GM12878 (cell line): ENCODE measurements at regions of chr6 and their contacts with region 1.

Region 1: GRCh38 chr6:108782179-108783041 is 65.8 kb upstream of the ARMC2 start:
- DNase-seq: no peak
- ATAC-seq: peak; percentile 98
- H3K4me3 ChIP-seq: peak overlapping the region; percentile 42; the same call in 1 of the 2 replicates
- H3K27ac ChIP-seq: no peak overlapping the region
- H3K4me1 ChIP-seq: no peaks in the 10 kb centered on the region
- H3K27me3 ChIP-seq: peaks cover 3 to 22% of the 10 kb centered on the region in 2 experiments; a peak in 3 of 4 replicates
- CTCF ChIP-seq: peak; percentile 81 to 93 (median 86)
- EP300 ChIP-seq: no peak
- POLR2A ChIP-seq: no peak
- RAD21 ChIP-seq: peak; percentile 78

Region 2: DNA sequence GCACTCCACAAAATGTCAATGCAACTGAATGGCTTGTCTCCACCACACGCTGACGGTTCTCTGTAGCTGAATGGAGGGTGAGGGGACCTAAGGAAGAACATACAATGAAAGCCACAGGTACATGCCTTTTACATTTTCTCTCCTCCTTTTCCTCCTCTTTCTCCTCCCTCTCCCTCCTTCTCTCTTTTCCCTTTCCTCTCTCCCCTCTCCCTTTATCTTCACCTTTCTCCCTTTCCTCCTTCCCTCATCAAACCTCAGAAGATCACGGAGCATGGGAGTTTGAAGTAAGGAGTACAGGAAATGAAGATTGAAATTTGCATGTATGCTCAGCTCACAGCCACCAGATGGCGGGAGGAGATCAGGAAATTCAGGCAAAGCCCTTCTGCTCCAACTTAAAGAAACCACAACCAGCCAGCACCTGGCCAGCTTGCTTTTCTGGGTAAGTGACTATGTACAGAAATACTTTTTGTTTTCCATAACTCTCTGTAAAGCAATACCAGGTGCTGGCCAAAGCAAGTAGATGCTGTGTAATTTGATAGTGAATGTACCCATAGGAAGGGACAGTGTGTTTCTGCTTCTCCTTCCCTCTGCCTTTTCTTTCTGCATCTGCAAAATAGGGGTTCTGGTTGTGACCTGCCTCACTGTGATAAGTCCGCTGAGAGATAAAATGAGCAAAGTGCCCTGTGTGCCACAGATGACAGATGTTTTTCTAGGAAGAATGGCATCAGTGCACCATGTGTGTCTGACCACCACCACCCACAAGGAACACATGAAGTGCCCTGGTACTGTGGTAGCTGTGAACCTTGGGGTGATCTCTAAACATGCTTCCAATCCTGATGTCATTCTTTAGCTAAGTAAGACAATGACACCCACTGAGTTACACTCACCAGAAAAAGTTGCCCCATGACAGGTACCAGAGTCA is 240.3 kb before region 1 on chr6:
- CTCF ChIA-PET with region 1: interaction called, 29 read pairs
- POLR2A ChIA-PET with region 1: no interaction called
- RAD21 ChIA-PET with region 1: interaction called, 6 read pairs
- SMC1A ChIA-PET with region 1: interaction called, 18 read pairs
- in situ Hi-C with region 1: loop called (anchors 5 kb)
- intact Hi-C with region 1: loop called (anchors 1 kb)
- DNase-seq: no peak
- ATAC-seq: peak; percentile 85
- H3K4me3 ChIP-seq: no peak overlapping the region
- H3K27ac ChIP-seq: no peak overlapping the region
- H3K4me1 ChIP-seq: no peaks in the 10 kb centered on the region
- H3K27me3 ChIP-seq: peaks cover 0 to 1% of the 10 kb centered on the region in 2 experiments; a peak in 2 of 4 replicates
- CTCF ChIP-seq: peak; percentile 76 to 91 (median 80)
- EP300 ChIP-seq: no peak
- POLR2A ChIP-seq: no peak
- RAD21 ChIP-seq: peak; percentile 95

Region 3: DNA sequence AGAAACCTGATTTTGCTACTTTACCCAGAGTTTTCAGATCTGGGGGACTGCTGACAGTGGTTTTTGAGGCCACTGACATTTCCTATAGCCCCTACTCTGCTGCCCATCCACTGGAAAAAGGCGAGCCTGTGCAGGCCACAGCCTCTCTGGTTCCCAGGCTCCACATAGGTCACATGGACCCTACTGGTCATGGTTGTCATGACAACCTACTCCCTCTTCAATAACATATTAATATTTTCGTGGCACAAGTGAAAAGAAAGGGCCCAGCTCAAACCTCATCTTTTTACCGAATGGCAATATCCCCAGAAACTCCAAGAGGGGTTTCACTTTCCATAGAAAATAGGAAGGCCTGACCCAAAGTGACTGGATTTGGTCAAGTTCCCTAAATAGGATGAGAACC is 232.7 kb before region 1 on chr6:
- CTCF ChIA-PET with region 1: interaction called, 3 read pairs
- POLR2A ChIA-PET with region 1: no interaction called
- RAD21 ChIA-PET with region 1: no interaction called
- SMC1A ChIA-PET with region 1: interaction called, 5 read pairs
- in situ Hi-C with region 1: loop called (anchors 5 kb)
- intact Hi-C with region 1: no loop called
- DNase-seq: no peak
- ATAC-seq: no peak
- H3K4me3 ChIP-seq: no peak overlapping the region
- H3K27ac ChIP-seq: no peak overlapping the region
- H3K4me1 ChIP-seq: no peaks in the 10 kb centered on the region
- H3K27me3 ChIP-seq: peaks cover 2 to 6% of the 10 kb centered on the region in 2 experiments; a peak in 2 of 4 replicates
- CTCF ChIP-seq: no peak
- EP300 ChIP-seq: no peak
- POLR2A ChIP-seq: no peak
- RAD21 ChIP-seq: no peak

Region 4: GRCh38 chr6:108558372-108559096 is 223.9 kb before region 1 on chr6:
- CTCF ChIA-PET with region 1: interaction called, 3 read pairs
- POLR2A ChIA-PET with region 1: no interaction called
- RAD21 ChIA-PET with region 1: no interaction called
- SMC1A ChIA-PET with region 1: no interaction called
- in situ Hi-C with region 1: no loop called
- intact Hi-C with region 1: loop called (anchors 5 kb)
- DNase-seq: peak; percentile 81
- ATAC-seq: peak; percentile 71
- H3K4me3 ChIP-seq: peak overlapping the region; percentile 86
- H3K27ac ChIP-seq: peak overlapping the region; percentile 61; the same call in 1 of the 2 replicates
- H3K4me1 ChIP-seq: peaks cover 4% of the 10 kb centered on the region; the same call in 1 of the 2 replicates
- H3K27me3 ChIP-seq: peaks cover 6 to 8% of the 10 kb centered on the region in 2 experiments
- CTCF ChIP-seq: no peak
- EP300 ChIP-seq: peak in 1 of 2 experiments; percentile 21; a peak in 1 of 4 replicates
- POLR2A ChIP-seq: peak; percentile 46; the same call in 1 of the 2 replicates
- RAD21 ChIP-seq: no peak

Region 5: GRCh38 chr6:108896111-108896661 is 113.8 kb after region 1 on chr6:
- CTCF ChIA-PET with region 1: interaction called, 5 read pairs
- POLR2A ChIA-PET with region 1: no interaction called
- RAD21 ChIA-PET with region 1: no interaction called
- SMC1A ChIA-PET with region 1: interaction called, 5 read pairs
- in situ Hi-C with region 1: no loop called
- intact Hi-C with region 1: loop called (anchors 5 kb)
- DNase-seq: no peak
- ATAC-seq: no peak
- H3K4me3 ChIP-seq: no peak overlapping the region
- H3K27ac ChIP-seq: no peak overlapping the region
- H3K4me1 ChIP-seq: no peaks in the 10 kb centered on the region
- H3K27me3 ChIP-seq: peaks cover 3 to 4% of the 10 kb centered on the region in 2 experiments; a peak in 2 of 4 replicates
- CTCF ChIP-seq: no peak
- EP300 ChIP-seq: peak in 1 of 2 experiments; percentile 34; a peak in 1 of 4 replicates
- POLR2A ChIP-seq: no peak
- RAD21 ChIP-seq: no peak

Region 6: DNA sequence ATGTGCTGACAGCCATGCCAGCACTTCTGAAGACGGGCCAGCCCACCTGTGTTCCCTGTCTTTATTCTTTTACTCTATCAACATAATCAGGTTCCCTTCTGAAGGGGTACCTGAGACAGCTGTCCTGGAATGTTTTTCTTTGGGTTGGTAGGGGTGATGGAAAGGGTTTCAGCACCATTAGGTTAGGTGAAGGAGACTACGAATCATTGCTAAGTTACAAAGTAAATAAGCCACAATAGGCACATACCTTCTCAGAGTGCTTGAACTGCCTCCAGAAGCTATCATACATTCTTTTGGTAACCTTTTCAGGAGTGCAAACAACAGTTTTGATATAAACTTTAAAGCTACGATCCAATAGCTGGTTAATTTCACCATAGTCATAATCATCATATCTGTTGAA is 205.9 kb after region 1 on chr6:
- CTCF ChIA-PET with region 1: no interaction called
- POLR2A ChIA-PET with region 1: no interaction called
- RAD21 ChIA-PET with region 1: no interaction called
- SMC1A ChIA-PET with region 1: no interaction called
- in situ Hi-C with region 1: no loop called
- intact Hi-C with region 1: no loop called
- DNase-seq: no peak
- ATAC-seq: no peak
- H3K4me3 ChIP-seq: no peak overlapping the region
- H3K27ac ChIP-seq: no peak overlapping the region
- H3K4me1 ChIP-seq: no peaks in the 10 kb centered on the region
- H3K27me3 ChIP-seq: no peaks in the 10 kb centered on the region
- CTCF ChIP-seq: no peak
- EP300 ChIP-seq: no peak
- POLR2A ChIP-seq: no peak
- RAD21 ChIP-seq: no peak